GM13976 (cell line): ENCODE measurements at regions of chr20 and their contacts with region 1.

Region 1: DNA sequence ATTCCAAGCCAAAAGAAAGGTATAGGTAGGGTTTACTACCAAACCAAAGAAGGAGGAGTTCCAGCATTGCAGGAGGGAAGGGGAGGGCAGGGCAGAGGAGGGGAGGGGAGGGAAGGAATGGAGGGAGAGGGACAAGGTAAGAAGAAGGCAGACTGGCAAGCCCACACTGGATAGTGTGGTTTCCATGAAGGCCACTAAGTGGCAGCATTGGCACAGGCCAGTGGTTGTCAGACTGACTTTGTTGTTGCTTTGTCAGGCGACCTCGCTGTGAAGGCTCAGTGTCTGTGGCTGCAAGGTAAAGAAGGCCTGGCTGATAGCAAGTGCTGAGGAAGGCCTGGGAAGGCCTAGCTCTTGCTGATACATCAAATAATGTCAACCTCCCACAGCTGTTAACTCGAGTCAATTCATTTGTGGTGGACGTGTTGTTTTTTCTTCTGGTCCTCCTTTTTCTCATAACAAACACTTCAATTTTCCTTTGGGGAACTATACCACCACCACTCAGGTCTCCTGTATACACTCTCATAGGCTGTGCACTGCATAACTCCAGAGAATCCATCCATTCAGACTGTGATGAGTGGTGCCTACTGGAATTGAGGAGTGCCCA is 7.7 kb upstream of the ZNF334 start:
- DNase-seq: peak; percentile 62
- CTCF ChIP-seq: peak; percentile 56

Region 2: DNA sequence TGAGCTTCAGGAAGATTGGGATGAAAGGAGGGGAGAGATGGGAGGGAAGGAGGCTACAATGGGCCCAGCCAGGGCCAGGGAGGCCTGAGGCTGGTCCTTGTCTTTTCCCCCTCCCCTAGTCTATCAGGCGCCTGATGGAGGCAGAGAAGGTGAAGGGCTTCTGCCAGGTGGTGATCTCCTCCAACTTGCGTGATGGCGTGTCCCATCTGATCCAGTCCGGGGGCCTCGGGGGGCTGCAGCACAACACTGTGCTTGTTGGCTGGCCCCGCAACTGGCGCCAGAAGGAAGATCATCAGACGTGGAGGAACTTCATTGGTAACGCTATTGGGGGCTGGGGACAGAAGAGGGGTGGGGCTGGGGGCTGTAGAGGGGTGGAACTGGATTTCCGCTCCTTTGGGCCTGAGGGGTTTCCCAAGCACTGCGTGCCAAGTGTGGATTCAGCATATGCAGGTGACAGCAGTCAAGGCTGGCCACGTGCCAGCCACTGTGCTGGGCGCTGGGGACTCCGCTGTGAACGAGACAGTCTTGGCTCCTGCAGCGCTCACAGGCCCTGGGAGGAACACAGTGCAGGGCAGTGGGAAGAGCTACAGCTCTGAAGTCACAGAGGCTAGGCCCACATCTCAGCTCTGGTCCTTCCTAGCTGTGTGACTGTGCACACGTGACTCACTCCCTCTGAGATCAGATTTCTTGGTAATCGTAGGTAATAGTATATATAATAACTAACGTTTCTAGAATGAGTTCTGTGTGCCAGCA is 469.3 kb before region 1 on chr20:
- in situ Hi-C with region 1: no loop called
- DNase-seq: no peak
- CTCF ChIP-seq: no peak

Region 3: GRCh38 chr20:46253391-46253790 is 267.7 kb before region 1 on chr20:
- in situ Hi-C with region 1: no loop called
- DNase-seq: no peak
- CTCF ChIP-seq: no peak

Region 4: GRCh38 chr20:46681032-46681854 is 160.2 kb after region 1 on chr20:
- in situ Hi-C with region 1: loop called (anchors 5 kb)
- DNase-seq: peak; percentile 69
- CTCF ChIP-seq: peak; percentile 82